Dendritic cell treated with granulocyte-macrophage colony-stimulating factor and Interleukin-4, amounts not matched to agents 40 ng/mL and 50 ng/mL, for 4 days (primary cell): ENCODE measurements at regions of chr14 and their contacts with region 1.

Region 1: DNA sequence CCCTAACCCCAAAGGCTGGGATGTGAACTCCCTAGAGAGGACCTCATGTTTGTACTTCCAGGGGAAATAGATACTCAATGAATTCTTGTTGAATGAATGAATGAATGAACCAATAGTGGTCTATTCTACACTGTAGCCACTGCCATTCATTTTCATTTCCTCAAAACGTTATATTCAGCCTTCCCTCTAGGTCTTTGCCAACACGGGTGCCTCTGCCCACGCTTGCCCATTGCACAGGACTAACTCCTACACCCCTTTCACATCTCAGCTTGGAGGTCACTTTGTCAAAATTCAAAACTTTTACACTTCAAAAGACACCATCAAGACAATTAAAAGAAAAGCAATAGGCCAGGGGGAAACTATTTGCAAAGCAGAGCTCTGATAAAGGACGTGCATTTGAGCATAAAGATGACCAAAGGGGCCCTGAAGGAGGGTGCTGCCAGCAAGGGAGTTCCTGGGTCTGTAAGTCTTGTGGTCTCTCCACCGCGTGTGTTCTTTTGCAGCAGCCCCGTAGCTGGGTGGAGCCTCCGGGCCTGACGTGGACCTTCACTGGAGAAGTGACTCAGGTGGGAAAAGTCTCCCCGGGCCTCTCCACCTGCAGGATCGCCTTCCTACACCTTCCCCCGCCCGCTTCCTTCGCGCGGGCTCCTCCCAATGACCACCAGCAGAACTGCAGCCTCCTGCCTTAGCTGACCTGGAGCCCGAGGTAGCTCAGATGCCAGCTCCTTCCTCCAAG is 31.5 kb downstream of the TMEM63C start:
- H3K4me3 Mint-ChIP-seq: no peak overlapping the region
- H3K27ac Mint-ChIP-seq: no peak overlapping the region
- H3K4me1 Mint-ChIP-seq: peaks cover 16% of the 10 kb centered on the region
- H3K27me3 Mint-ChIP-seq: peaks cover 11% of the 10 kb centered on the region

Region 2: GRCh38 chr14:76806446-76806845 is 406.7 kb before region 1 on chr14:
- intact Hi-C with region 1: no loop called
- H3K4me3 Mint-ChIP-seq: no peak overlapping the region
- H3K27ac Mint-ChIP-seq: no peak overlapping the region
- H3K4me1 Mint-ChIP-seq: peaks cover 48% of the 10 kb centered on the region
- H3K27me3 Mint-ChIP-seq: no peaks in the 10 kb centered on the region

Region 3: GRCh38 chr14:77151918-77152588 is 61.1 kb before region 1 on chr14:
- intact Hi-C with region 1: loop called (anchors 10 kb)
- H3K4me3 Mint-ChIP-seq: no peak overlapping the region
- H3K27ac Mint-ChIP-seq: no peak overlapping the region
- H3K4me1 Mint-ChIP-seq: no peaks in the 10 kb centered on the region
- H3K27me3 Mint-ChIP-seq: peaks cover 21% of the 10 kb centered on the region